ENCODE measurements at regions of chr14 and their contacts with region 1.

Region 1: GRCh38 chr14:23301288-23301968 is 1.2 kb downstream of the PPP1R3E start:
- DNase-seq: peak; percentile 78
- H3K4me3 ChIP-seq: peak overlapping the region; percentile 74
- CTCF ChIP-seq: peak; percentile 81

Region 2: DNA sequence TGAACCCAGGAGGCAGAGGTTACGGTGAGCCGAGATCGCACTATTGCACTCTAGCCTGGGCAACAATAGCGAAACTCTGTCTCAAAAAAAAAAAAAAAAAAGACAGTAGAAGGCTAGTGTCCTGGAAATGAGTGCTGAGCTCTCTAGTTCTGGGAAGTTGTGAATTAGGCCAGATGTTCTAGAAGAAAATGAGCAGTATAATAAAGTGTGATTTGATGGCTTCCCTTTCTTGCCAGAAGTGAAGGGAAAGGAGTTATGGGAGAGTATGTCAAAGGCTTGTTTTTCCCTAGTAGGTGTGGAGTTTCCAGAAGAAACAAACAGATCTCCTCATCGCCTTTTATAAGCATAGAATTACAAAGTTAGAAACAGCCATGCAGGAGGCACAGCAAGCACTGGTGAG is 43.2 kb before region 1 on chr14:
- CTCF ChIA-PET with region 1: interaction called, 25 read pairs
- POLR2A ChIA-PET with region 1: no interaction called
- DNase-seq: no peak
- H3K4me3 ChIP-seq: no peak overlapping the region
- CTCF ChIP-seq: no peak

Region 3: GRCh38 chr14:23286020-23286905 is 15.2 kb before region 1 on chr14 and contains the start of gene HOMEZ:
- CTCF ChIA-PET with region 1: interaction called, 300 read pairs
- POLR2A ChIA-PET with region 1: interaction called, 9 read pairs
- DNase-seq: peak; percentile 81
- H3K4me3 ChIP-seq: peak within 1 kb of the TSS; percentile 83
- CTCF ChIP-seq: peak; percentile 23

Region 4: GRCh38 chr14:23446291-23446851 is 144.9 kb after region 1 on chr14:
- CTCF ChIA-PET with region 1: no interaction called
- POLR2A ChIA-PET with region 1: no interaction called
- DNase-seq: no peak
- H3K4me3 ChIP-seq: no peak overlapping the region
- CTCF ChIP-seq: no peak

Region 5: GRCh38 chr14:23588884-23589598 is 287.6 kb after region 1 on chr14:
- CTCF ChIA-PET with region 1: no interaction called
- POLR2A ChIA-PET with region 1: no interaction called
- DNase-seq: peak; percentile 44
- H3K4me3 ChIP-seq: no peak overlapping the region
- CTCF ChIP-seq: peak; percentile 96